ENCODE measurements at regions of chr9 and their contacts with region 1.

Region 1: DNA sequence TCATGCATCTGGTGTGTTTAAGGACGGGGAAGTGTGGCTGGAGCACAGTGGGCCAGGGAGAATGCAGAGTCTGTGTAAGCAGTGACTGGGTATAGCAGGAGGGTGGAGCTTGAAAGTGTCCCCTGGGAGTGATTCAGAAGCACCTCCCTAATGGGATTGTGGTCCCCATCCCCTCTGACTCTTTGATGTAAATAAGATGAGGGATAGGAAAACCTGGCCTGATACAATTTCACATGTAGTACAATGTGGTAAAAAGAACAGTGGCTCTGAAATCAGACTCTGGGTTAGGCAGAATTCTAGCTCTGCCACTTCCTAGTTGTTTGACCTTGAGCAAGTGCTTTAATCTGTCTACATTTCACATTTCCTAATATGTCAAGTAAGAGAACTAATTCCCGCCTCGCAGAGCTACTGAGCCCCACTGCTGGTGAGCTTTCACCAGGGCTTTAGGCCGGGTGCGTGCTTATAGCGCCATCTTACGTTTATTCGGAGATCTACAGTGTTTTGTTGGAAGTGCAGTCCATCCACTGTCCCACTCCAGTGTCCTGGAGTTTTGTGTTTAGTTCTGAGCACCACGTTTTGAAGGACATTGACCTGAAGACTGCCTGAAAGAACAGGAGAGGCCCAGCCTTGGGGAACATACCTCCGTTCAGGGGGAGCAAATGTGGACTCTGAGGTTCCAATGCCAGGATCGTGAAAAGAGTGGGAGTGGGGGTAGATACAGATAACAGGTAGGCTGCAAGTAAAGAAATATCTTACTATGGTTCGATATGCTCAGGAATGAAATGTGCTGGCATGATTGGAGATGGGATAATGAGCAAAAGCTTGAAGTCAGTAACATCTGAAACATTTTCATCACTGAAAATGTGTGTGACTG is 51.2 kb upstream of the TESK1 start:
- DNase-seq: peak in 1 of 3 donors; percentile 56
- ATAC-seq: peak; percentile 84
- H3K4me3 ChIP-seq: no peak overlapping the region
- H3K4me1 ChIP-seq: no peaks in the 10 kb centered on the region
- CTCF ChIP-seq: peak; percentile 42

Region 2: DNA sequence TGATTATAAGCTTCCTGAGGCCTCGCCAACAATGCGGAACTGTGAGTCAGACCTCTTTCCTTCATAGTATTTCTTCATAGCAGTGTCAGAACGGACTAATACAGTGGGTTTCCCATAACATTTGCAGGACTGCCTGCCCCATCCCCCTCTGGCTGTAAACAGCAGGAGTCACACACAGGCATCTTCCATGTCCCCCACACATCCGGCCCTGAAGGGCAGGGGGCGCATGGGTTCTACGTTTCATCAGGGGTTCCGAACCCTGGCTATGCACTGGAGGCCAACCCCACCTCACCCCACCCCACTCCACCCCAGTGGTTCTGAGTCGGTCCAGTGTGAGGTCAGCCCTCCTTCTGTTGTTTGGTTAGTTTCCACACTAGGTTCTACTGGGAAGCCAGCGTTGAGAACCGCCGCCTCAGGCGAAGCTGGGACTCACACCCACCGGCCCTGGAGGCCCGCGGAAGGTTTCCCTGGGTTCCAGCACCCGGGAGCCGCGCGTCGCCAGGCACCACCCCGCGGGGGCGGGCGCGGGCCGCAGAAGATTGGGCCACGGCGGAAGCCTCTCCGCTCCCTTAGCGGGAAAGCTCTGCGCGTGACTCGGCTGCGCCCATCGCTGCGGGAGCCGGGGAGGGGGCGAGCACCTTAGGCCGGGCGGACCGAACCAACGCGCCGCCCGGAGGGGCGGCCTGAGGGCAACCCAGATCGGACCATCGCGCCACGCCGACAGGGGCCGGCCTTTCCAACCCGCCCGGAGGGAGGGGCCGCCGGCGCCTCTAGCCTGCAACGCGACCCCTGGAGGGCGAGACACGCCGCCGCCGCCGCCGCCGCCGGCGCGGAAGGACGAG is 64.4 kb before region 1 on chr9 and contains the start of gene RUSC2:
- intact Hi-C with region 1: loop called (anchors 5 kb)
- DNase-seq: peak; percentile 64 to 81 (median 79)
- ATAC-seq: peak; percentile 88
- H3K4me3 ChIP-seq: peak within 1 kb of the TSS; percentile 21
- H3K4me1 ChIP-seq: no peaks in the 10 kb centered on the region
- CTCF ChIP-seq: no peak
- total RNA-seq, gene RUSC2: 1.6 to 60.5 (median 6.6) TPM